ENCODE measurements at regions of chr12 and their contacts with region 1.

Region 1: GRCh38 chr12:9813821-9814809 is 13.2 kb upstream of the KLRF1 start:
- DNase-seq: peak; percentile 13
- ATAC-seq: peak; percentile 99
- H3K4me3 ChIP-seq: no peak overlapping the region
- H3K27ac ChIP-seq: no peak overlapping the region
- H3K4me1 ChIP-seq: no peaks in the 10 kb centered on the region
- H3K27me3 ChIP-seq: peaks cover 64% of the 10 kb centered on the region
- CTCF ChIP-seq: peak; percentile 37 to 85 (median 78); a peak in 5 of 6 replicates
- POLR2A ChIP-seq: no peak
- RAD21 ChIP-seq: peak; percentile 62

Region 2: GRCh38 chr12:9925708-9926393 is 111.7 kb after region 1 on chr12:
- CTCF ChIA-PET with region 1: no interaction called
- POLR2A ChIA-PET with region 1: no interaction called
- RAD21 ChIA-PET with region 1: no interaction called
- intact Hi-C with region 1: loop called (anchors 2 kb)
- DNase-seq: peak; percentile 24
- ATAC-seq: peak; percentile 73
- H3K4me3 ChIP-seq: no peak overlapping the region
- H3K27ac ChIP-seq: no peak overlapping the region
- H3K4me1 ChIP-seq: no peaks in the 10 kb centered on the region
- H3K27me3 ChIP-seq: peaks cover 30% of the 10 kb centered on the region
- CTCF ChIP-seq: peak; percentile 43 to 50 (median 47); a peak in 5 of 6 replicates
- POLR2A ChIP-seq: no peak
- RAD21 ChIP-seq: peak; percentile 47

Region 3: DNA sequence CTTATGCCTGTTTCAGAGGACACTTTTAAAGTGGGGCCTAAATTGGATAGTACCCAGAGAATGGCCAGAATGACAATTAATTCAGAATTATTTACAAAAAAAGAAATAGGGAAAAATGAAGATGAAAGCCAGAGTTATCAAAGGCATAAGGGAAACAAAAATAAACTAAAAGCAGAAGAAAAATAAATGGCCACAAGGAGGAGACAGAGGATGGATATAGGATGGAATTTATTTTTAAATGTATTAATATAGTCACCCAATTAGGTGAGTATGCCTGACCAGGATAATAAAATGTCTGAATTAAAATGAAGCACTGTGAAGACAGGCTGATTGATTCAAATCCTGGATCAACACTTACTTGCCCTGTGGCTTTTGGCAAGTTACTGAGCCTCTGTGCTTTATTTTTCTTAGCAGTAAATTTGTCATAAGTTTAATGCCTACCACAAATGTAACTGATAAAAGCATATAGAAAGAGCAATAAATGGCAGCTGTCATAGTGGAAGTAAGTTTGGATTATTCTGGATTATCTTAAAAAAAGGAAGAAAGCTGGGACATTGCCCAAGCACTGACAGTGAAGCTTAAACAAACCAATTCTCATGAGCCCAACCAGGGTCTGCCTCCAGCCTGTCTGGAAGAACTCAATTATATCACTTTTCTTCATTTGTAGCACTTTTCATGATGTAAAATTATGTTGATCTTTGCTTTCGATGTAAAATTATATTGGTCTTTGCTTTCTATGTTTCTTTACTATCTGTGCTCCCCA is 219.8 kb after region 1 on chr12:
- CTCF ChIA-PET with region 1: no interaction called
- POLR2A ChIA-PET with region 1: no interaction called
- RAD21 ChIA-PET with region 1: no interaction called
- intact Hi-C with region 1: no loop called
- DNase-seq: no peak
- ATAC-seq: 0 out of 2 replicates have a peak, but pooled peaks have one; percentile 25
- H3K4me3 ChIP-seq: no peak overlapping the region
- H3K27ac ChIP-seq: no peak overlapping the region
- H3K4me1 ChIP-seq: no peaks in the 10 kb centered on the region
- H3K27me3 ChIP-seq: peaks cover 6% of the 10 kb centered on the region
- CTCF ChIP-seq: peak; percentile 4 to 55 (median 51); a peak in 5 of 6 replicates
- POLR2A ChIP-seq: no peak
- RAD21 ChIP-seq: peak; percentile 60

Region 4: DNA sequence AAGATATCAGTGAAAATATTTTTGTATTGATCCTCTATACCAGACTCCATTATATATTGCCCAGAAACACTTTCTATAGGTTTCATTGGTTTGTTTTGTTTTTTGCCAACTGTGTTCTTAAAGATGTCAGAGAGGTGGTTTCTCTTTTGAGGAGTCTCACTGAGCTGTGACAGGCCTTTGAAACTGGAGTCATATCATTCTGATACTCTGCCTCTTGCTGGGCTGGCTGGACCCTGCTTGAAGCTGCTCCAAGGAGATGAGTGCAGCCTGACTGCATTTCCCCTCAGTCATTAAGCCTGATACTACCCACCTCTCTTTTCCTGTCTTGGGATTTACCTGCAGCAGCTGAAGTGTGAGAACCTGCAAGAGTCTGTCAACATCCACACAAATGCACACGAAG is 1336.7 kb after region 1 on chr12:
- CTCF ChIA-PET with region 1: no interaction called
- POLR2A ChIA-PET with region 1: no interaction called
- RAD21 ChIA-PET with region 1: no interaction called
- intact Hi-C with region 1: no loop called
- DNase-seq: no peak
- ATAC-seq: no peak
- H3K4me3 ChIP-seq: no peak overlapping the region
- H3K27ac ChIP-seq: no peak overlapping the region
- H3K4me1 ChIP-seq: no peaks in the 10 kb centered on the region
- H3K27me3 ChIP-seq: no peaks in the 10 kb centered on the region
- CTCF ChIP-seq: no peak
- POLR2A ChIP-seq: no peak
- RAD21 ChIP-seq: no peak